ENCODE measurements at regions of chr7 and their contacts with region 1.

Region 1: DNA sequence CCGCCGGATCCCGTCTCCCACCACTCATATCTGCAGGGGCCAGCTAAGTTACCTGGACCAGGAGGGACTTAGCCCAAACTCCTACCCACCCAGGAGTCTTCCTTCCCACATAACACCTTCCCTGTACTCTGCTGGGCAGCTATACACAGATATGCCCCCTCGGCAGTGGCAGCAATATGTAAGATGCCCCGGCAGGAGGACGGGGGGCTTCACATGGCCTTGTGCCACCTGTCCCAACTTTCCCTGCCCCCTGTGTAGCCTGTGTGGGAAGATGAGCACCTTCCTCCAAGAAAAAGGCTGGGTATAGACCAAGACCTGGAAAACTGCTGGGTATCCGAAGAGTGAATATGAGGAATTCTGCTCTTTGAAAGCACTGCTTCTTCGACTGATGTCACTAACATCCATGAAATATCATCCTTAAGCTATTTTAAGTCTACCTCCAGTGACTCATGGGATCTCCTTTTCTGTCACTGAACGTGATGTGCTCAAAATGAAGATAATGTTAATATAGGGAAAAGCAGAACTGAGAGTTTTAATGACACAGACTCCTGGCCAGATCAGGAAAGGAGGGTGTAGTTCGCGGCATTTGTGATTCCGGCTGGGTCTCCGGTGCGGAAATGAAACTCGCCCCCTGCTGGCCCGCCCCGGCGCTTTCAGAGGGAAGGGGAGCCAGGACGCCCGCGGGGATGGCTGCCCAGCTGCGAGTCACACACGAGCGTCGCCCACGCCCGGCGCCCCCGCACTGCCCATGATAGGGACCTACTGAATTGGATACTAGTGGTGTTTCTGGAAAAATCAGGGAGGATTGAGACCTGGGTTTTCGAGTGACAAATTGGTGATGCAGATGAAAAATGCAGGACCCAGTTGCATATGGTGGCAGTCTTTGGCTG is 256.9 kb upstream of the NFE2L3 start:
- DNase-seq: peak; percentile 71
- ATAC-seq: peak; percentile 72
- H3K4me3 Mint-ChIP-seq: peak overlapping the region; percentile 34
- H3K27ac Mint-ChIP-seq: no peak overlapping the region
- H3K4me1 Mint-ChIP-seq: peaks cover 30% of the 10 kb centered on the region
- H3K27me3 Mint-ChIP-seq: peaks cover 28% of the 10 kb centered on the region

Region 2: GRCh38 chr7:25787336-25787735 is 107.8 kb before region 1 on chr7:
- CTCF ChIA-PET with region 1: no interaction called
- DNase-seq: no peak
- ATAC-seq: no peak
- H3K4me3 Mint-ChIP-seq: no peak overlapping the region
- H3K27ac Mint-ChIP-seq: no peak overlapping the region
- H3K4me1 Mint-ChIP-seq: no peaks in the 10 kb centered on the region
- H3K27me3 Mint-ChIP-seq: peaks cover 8% of the 10 kb centered on the region

Region 3: DNA sequence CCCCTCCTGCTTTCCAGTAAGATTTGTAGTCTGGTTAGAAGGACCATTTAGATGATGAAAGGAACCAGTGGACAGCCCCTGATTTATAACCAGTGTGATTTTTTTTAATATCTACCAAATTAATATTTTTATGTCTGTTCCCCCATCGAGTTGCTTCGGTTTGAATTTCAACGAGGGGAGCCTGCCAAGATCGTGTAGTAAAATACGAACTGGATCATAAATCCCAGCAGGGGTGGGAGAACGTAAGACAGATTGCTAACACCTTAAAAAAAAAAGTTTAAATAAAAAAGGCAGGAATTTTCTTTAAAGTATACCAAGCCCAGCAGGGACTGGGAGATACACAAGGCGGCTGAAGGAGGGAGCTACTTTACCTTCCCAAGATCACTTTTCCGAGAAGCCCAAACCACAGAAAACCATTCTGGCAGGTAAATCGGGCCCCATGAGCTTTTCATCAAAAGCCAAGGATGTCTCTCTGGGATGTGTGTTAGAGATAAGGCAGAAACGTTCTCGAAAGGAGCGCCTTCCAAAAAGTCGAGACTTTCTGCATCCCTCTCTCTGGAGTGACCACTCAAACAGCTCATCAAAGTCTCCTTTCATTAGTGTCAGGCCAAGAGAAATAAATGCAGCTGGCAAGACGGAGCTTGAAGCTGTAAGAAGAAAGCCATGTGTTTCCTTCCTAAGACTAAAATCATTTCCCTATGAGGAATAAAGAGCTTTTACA is 13.7 kb before region 1 on chr7:
- CTCF ChIA-PET with region 1: interaction called, 17 read pairs
- DNase-seq: no peak
- ATAC-seq: no peak
- H3K4me3 Mint-ChIP-seq: no peak overlapping the region
- H3K27ac Mint-ChIP-seq: no peak overlapping the region
- H3K4me1 Mint-ChIP-seq: peaks cover under 1% of the 10 kb centered on the region
- H3K27me3 Mint-ChIP-seq: peaks cover 53% of the 10 kb centered on the region

Region 4: GRCh38 chr7:25908154-25908949 is 13.2 kb after region 1 on chr7:
- CTCF ChIA-PET with region 1: interaction called, 33 read pairs
- DNase-seq: no peak
- ATAC-seq: no peak
- H3K4me3 Mint-ChIP-seq: no peak overlapping the region
- H3K27ac Mint-ChIP-seq: no peak overlapping the region
- H3K4me1 Mint-ChIP-seq: peaks cover 9% of the 10 kb centered on the region
- H3K27me3 Mint-ChIP-seq: peaks cover 10% of the 10 kb centered on the region

Region 5: DNA sequence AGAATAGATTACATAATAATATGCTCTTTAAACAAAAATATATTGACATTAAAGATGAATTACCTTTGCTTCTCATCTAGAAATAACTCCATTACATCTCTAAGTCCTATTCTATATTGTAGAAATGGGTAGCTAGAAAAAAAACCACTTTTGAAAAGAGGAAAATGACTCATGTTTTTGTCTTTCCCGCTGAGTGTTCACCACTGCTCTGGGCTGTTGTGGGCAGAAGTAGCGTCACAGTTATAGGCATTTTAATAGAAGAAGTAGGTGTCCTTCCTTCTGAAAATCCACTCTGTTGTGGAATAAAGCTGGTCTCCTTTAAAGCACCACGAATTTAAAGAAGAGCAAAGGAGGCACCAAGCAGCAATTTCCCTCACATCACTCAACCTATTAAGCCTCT is 139.2 kb after region 1 on chr7:
- CTCF ChIA-PET with region 1: no interaction called
- DNase-seq: no peak
- ATAC-seq: no peak
- H3K4me3 Mint-ChIP-seq: no peak overlapping the region
- H3K27ac Mint-ChIP-seq: no peak overlapping the region
- H3K4me1 Mint-ChIP-seq: peaks cover 5% of the 10 kb centered on the region
- H3K27me3 Mint-ChIP-seq: peaks cover 37% of the 10 kb centered on the region

Region 6: DNA sequence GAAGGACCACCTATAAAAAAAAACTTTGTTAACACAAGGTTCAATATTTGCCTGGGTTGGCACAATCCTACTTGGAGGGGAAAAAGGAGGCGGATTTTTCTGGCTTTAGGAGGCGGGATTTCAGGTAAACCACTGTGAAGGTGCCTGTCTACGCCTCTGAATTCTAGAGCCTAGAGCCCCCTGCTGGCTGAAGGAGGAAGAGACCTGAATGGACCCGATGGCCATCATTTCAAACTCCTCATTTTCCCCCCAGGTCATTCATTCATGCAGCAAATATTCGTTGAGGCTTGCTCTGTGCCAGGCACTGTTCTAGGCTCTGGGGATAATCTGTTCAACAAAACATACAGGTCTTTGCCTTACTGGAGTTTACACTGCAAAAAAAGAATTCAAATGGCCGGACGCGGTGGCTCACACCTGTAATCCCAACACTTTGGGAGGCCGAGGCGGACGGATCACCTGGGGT is 166.6 kb after region 1 on chr7:
- CTCF ChIA-PET with region 1: interaction called, 36 read pairs
- DNase-seq: peak; percentile 81
- ATAC-seq: peak; percentile 73
- H3K4me3 Mint-ChIP-seq: no peak overlapping the region
- H3K27ac Mint-ChIP-seq: no peak overlapping the region
- H3K4me1 Mint-ChIP-seq: peaks cover 14% of the 10 kb centered on the region
- H3K27me3 Mint-ChIP-seq: peaks cover 36% of the 10 kb centered on the region

Region 7: DNA sequence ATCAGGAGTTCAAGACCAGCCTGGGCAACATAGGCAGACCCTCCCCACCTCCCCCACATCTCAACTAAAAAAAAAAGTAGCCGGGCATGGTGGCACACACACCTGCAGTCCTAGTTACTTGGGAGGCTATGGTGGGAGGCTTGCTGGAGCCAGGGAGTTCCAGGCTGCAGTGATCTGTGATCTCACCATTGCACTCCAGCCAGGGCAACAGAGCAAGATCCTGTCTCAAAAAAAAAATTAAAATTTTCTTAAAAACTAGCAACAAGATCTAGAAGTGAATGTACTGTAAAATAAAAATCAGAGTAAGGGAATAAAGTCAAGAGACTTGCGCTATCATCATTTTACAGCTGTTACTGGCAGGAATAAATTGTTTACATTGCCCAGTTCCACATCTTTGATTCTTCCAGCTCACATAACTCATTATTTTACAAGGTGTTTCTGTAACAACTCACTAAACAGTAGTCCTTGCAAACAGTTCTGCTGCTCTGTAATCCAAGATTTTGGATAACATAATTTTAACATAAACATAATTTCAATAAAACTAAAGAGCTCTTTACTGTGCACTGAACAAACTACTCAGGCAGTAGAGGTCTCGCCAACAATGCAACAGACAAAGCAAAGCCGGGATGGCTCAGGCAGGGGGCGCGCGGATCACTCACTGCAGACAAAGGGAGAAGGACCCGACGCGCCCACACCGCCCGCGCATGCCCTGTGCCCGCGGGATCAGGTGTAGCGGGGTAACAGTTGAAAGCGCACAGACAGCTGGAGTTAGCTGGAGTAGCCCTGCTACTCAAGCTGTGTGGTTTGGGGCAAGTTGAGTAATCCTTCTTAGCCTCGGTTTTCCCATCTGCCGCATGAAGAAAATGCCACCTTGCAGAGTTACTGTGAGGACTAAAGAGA is 183.5 kb after region 1 on chr7:
- CTCF ChIA-PET with region 1: interaction called, 25 read pairs
- DNase-seq: peak; percentile 85
- ATAC-seq: peak; percentile 99
- H3K4me3 Mint-ChIP-seq: no peak overlapping the region
- H3K27ac Mint-ChIP-seq: no peak overlapping the region
- H3K4me1 Mint-ChIP-seq: peaks cover 8% of the 10 kb centered on the region
- H3K27me3 Mint-ChIP-seq: peaks cover 73% of the 10 kb centered on the region

Region 8: DNA sequence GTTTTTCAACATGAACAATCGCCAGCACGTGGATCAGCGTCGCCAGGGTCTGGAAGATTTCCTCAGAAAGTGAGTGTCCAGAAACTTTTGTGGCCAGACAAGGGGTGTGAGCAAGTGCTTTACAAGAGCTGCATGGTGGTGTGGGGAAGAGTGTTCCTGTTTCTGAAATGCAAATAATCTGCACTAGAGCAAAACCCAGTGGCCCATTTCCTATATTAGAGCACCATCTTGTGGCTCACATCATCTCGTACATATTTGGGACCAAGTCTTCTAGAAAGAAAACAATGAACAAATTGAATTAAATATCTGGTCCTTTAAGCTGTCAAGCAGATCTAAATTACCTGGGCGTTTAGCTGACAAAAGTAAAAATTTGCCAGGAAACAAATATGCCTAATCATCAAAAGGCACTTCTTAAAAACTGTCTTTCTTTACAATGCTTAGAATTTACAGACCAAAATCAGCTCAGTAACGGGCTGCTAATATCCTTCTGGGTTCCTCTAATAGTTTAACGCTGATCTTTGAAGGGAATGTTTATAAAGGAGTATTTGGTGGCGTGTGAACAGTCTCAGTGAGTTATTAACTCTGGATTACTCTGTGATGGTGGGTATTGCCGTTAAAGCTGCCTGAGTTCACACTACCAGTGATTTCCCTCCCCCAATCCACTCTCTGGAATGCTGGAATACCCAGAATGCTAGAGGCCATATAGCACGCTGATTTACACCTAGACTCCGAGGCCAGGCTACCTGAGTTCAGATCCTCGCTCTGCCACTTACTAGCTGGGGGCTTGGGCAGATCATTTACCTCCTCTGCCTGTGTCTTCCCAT is 470.1 kb after region 1 on chr7:
- CTCF ChIA-PET with region 1: interaction called, 22 read pairs
- DNase-seq: peak; percentile 68
- ATAC-seq: peak; percentile 76
- H3K4me3 Mint-ChIP-seq: no peak overlapping the region
- H3K27ac Mint-ChIP-seq: no peak overlapping the region
- H3K4me1 Mint-ChIP-seq: peaks cover 20% of the 10 kb centered on the region
- H3K27me3 Mint-ChIP-seq: no peaks in the 10 kb centered on the region

Region 9: DNA sequence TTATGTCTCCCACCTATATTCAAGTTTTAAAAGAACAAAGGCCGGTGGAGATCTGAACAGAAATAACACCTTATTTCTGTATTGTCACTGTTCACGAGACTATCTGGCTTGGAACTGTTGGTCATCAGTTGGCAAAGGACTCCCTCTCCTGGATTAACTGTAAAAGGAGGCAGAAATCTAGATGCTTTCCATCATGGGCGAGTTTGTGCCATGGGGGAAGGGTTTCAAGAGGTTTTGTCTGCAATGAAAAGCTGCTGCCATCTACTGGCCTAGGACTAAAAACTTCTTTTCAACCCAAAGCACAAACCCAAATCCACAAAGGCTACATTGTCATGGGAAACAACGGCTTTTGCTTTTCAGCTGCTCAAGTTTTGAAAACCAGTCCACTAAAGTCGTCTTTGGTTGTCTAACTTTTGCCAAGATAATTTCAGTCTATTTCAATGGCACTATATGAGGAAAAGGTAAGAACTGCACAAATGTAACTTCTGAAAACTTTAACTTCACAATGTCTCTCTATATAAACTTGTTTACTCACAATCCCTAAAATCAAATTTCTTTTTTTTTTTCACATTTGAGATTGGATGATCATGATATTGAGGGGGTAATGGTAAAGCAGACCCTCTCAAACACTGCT is 772.5 kb after region 1 on chr7:
- CTCF ChIA-PET with region 1: interaction called, 10 read pairs
- DNase-seq: peak; percentile 75
- ATAC-seq: peak; percentile 76
- H3K4me3 Mint-ChIP-seq: no peak overlapping the region
- H3K27ac Mint-ChIP-seq: no peak overlapping the region
- H3K4me1 Mint-ChIP-seq: peaks cover 16% of the 10 kb centered on the region
- H3K27me3 Mint-ChIP-seq: peaks cover 8% of the 10 kb centered on the region

Measured in activated CD8-positive, alpha-beta memory T cell treated with anti-CD3 and anti-CD28 coated beads, Interleukin-2, amount 10 ng/mL, durations not matched to agents 7 days and 5 days (primary cell).